ENCODE measurements at regions of chr10 and their contacts with region 1.

Region 1: DNA sequence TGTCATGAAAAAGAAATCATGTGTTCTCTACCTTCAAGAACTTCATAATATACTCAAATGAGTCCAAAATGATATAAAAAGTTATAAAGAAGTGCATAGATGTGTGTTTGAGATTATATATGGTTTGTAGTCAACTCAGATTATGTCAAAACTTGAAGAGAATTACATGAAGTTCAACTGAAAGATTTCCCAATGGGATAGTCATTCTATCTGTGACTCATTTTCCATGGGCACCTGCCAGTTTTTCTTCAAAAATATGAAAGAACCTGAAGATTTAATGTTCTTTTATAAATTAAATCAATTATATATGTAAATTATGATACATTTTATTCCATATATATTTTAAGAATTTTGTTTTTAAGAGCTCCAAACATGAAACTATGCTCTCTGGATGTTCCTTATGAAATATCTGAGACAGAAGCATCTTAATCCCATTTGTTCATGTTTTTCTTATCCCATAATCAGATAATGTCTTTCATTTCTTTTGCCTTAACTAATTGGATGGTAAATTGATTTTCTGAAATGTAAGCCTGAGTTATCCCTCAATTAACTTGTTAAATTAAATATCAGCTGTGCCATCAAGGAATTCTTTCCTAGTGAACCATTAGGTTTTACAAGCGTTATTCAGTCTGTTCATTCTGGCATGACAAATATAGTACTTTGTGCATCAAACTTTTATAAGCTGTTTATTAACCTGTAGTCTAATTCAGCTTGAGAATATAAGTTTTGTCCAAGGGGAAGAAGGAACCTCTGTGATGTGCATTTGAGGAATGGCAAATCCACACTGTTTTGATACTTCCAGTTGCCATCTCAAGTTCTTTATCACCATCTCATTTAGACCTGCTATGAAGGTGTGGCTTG is 387.0 kb downstream of the IPMK start:
- DNase-seq: no peak
- H3K4me3 ChIP-seq: no peak overlapping the region
- H3K27ac ChIP-seq: no peak overlapping the region
- H3K4me1 ChIP-seq: no peaks in the 10 kb centered on the region
- H3K27me3 ChIP-seq: no peaks in the 10 kb centered on the region
- CTCF ChIP-seq: no peak
- POLR2A ChIP-seq: no peak

Region 2: DNA sequence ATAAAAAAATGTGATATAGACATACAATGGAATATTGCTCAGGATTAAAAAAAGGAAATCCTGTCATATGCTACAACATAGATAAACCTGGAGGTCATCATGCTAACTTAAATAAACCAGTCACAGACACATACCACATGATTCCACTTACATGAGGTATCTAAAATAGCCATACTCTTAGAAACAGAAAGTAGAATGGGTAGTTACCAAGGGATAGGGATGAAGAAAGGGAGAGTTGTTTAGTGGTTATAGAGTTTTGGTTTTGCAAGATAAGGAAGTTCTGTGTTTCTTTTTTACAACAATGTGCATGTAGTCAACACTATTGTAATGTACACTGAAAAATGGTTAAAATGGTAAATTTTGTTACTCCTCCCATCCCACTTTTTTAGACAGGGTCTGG is 662.5 kb after region 1 on chr10:
- intact Hi-C with region 1: loop called (anchors 5 kb)
- DNase-seq: no peak
- H3K4me3 ChIP-seq: no peak overlapping the region
- H3K27ac ChIP-seq: no peak overlapping the region
- H3K4me1 ChIP-seq: no peaks in the 10 kb centered on the region
- H3K27me3 ChIP-seq: no peaks in the 10 kb centered on the region
- CTCF ChIP-seq: no peak
- POLR2A ChIP-seq: no peak

Region 3: GRCh38 chr10:59027975-59028655 is 1147.4 kb after region 1 on chr10:
- intact Hi-C with region 1: no loop called
- DNase-seq: no peak
- H3K4me3 ChIP-seq: no peak overlapping the region
- H3K27ac ChIP-seq: no peak overlapping the region
- H3K4me1 ChIP-seq: no peaks in the 10 kb centered on the region
- H3K27me3 ChIP-seq: no peaks in the 10 kb centered on the region
- CTCF ChIP-seq: no peak
- POLR2A ChIP-seq: no peak